Breast epithelium (tissue), 4 donors: ENCODE measurements at regions of chr1 and their contacts with region 1.

Region 1: GRCh38 chr1:211630236-211631081 is 45.0 kb downstream of the NEK2 start:
- DNase-seq: no peak
- H3K4me3 ChIP-seq: no peak overlapping the region
- H3K27ac ChIP-seq: no peak overlapping the region
- H3K4me1 ChIP-seq: peaks cover 0 to 6% of the 10 kb centered on the region in 2 donors
- H3K27me3 ChIP-seq: no peaks in the 10 kb centered on the region
- CTCF ChIP-seq: no peak
- POLR2A ChIP-seq: no peak

Region 2: GRCh38 chr1:210516696-210517459 is 1113.6 kb before region 1 on chr1:
- intact Hi-C with region 1: no loop called
- DNase-seq: no peak
- H3K4me3 ChIP-seq: no peak overlapping the region
- H3K27ac ChIP-seq: no peak overlapping the region
- H3K4me1 ChIP-seq: no peaks in the 10 kb centered on the region
- H3K27me3 ChIP-seq: no peaks in the 10 kb centered on the region
- CTCF ChIP-seq: no peak
- POLR2A ChIP-seq: no peak

Region 3: DNA sequence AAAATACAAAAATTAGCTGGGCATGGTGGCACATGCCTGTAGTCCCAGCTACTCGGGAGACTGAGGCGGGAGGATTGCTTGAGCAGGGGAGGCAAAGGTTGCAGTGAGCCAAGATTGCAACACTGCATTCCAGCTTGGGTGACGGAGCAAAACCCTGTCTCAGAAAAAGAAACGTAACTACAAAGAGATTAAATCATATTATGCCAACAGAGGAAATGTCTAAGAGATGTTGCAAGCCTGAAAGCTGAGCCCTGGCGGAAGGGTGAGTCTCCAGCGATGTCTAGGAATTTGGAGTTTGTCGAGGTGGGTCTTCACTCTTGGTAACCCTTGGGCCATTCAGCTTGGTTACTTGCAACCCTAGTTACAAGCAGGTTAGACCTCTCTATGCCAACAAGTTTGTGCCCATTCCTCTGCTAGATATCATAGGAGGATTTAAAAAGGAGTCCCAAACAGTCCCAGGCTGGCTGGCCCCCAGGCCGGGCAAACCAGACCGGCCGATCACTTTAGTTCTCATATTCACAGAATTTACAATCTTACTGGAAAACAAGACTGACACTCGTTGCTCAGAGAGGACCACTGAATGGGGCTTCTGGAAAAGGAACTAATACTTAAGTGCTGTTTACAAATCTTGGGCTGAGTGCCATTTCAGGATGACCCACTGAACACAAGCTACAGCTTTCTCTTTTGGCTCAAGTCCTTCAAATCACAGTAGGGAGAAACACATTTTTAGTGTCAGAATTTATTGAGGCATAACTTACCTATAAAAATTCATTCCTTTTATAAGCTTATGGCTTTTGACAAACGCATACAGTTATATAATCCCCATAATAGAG is 78.6 kb before region 1 on chr1:
- intact Hi-C with region 1: no loop called
- DNase-seq: no peak
- H3K4me3 ChIP-seq: no peak overlapping the region
- H3K27ac ChIP-seq: no peak overlapping the region
- H3K4me1 ChIP-seq: no peaks in the 10 kb centered on the region
- H3K27me3 ChIP-seq: no peaks in the 10 kb centered on the region
- CTCF ChIP-seq: no peak
- POLR2A ChIP-seq: no peak

Region 4: GRCh38 chr1:211607756-211608473 is 22.5 kb before region 1 on chr1:
- intact Hi-C with region 1: loop called (anchors 1 kb)
- DNase-seq: no peak
- H3K4me3 ChIP-seq: no peak overlapping the region
- H3K27ac ChIP-seq: no peak overlapping the region
- H3K4me1 ChIP-seq: peaks cover 0 to 2% of the 10 kb centered on the region in 2 donors
- H3K27me3 ChIP-seq: no peaks in the 10 kb centered on the region
- CTCF ChIP-seq: no peak
- POLR2A ChIP-seq: no peak